ENCODE measurements at regions of chr19 and their contacts with region 1.

Region 1: GRCh38 chr19:2782936-2783780 is at the start of gene SGTA:
- DNase-seq: peak; percentile 99
- H3K4me3 Mint-ChIP-seq: peak within 1 kb of the TSS; percentile 94
- H3K27ac Mint-ChIP-seq: peak within 1 kb of the TSS; percentile 91
- H3K4me1 Mint-ChIP-seq: peaks cover 65% of the 10 kb centered on the region
- H3K27me3 Mint-ChIP-seq: no peaks in the 10 kb centered on the region
- total RNA-seq, gene SGTA: 44.3 to 44.6 TPM

Region 2: DNA sequence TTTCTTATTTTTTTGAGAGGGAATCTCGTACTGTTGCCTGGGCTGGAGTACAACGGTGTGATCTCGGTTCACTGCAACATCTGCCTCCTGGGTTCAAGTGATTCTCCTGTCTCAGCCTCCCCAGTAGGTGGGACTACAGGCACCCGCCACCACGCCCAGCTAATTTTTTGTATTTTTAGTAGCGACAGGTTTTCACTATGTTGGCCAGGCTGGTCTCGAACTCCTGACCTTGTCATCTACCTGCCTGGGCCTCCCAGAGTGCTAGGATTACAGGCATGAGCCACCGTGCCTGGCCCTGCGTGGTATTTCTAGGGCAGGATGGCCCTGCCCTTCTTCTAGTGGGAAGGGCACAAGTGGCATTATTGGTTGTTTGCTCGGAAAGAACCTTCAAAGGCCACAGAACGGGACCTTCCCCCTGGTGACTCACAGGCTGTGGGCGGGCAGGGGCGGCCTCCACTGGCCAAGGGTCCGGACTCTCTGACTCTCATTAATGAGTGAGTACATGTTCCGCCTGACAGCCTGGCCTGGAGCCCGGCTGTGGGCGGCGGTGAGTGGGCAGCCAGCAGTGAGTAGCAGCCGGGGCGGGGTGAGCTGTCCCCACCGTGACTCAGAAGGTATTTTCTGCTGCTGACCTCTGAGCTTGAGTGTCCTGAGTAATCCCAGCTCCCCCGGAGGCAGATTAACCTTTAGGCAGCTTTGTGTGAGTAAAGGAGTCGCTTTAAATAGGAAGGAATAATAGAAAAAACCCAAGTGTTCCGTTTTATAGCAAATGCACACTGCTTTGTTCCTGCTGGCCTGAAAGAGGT is 614.3 kb before region 1 on chr19:
- CTCF ChIA-PET with region 1: no interaction called
- intact Hi-C with region 1: loop called (anchors 10 kb)
- DNase-seq: peak; percentile 71
- H3K4me3 Mint-ChIP-seq: peak overlapping the region; percentile 12
- H3K27ac Mint-ChIP-seq: peak overlapping the region; percentile 72
- H3K4me1 Mint-ChIP-seq: peaks cover 57% of the 10 kb centered on the region
- H3K27me3 Mint-ChIP-seq: no peaks in the 10 kb centered on the region

Region 3: DNA sequence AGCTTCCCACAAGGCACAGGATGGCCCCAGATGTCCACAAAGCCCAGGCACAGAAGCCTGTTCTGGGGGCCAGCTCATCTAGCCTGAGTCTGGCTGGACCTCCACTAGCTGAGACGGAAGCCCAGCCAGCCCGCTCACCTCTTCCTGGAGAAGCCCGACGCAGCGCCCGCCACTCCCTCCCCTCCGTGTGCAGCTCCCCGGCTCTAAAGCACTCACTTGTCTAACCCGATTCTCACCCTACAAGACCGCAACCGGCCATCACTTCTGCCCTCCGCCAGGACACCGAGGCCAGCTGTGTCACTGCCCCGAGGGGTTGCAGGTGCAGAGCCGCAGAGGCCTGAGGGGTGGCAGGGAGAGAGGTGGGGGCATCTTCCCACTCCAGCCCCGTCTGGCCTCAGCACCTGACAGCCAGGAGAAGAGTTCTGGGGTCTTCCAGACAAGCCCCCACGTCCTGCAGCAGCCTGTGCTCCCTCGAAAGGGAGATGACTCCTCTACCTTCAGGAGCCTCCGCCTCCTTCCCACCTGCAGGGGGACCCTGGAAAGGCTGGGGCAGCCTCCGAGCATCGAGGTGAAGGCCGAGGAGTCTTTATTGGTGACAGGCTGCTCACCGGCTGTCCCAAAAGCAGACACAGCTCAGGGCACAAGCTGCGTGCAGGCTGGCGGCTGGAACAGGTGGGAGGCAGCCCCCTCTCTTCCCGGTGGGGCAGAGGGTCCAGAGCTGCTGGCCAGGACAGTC is 56.1 kb before region 1 on chr19:
- CTCF ChIA-PET with region 1: no interaction called
- intact Hi-C with region 1: no loop called
- DNase-seq: no peak
- H3K4me3 Mint-ChIP-seq: no peak overlapping the region
- H3K27ac Mint-ChIP-seq: no peak overlapping the region
- H3K4me1 Mint-ChIP-seq: peaks cover 2% of the 10 kb centered on the region
- H3K27me3 Mint-ChIP-seq: peaks cover 17% of the 10 kb centered on the region

Region 4: DNA sequence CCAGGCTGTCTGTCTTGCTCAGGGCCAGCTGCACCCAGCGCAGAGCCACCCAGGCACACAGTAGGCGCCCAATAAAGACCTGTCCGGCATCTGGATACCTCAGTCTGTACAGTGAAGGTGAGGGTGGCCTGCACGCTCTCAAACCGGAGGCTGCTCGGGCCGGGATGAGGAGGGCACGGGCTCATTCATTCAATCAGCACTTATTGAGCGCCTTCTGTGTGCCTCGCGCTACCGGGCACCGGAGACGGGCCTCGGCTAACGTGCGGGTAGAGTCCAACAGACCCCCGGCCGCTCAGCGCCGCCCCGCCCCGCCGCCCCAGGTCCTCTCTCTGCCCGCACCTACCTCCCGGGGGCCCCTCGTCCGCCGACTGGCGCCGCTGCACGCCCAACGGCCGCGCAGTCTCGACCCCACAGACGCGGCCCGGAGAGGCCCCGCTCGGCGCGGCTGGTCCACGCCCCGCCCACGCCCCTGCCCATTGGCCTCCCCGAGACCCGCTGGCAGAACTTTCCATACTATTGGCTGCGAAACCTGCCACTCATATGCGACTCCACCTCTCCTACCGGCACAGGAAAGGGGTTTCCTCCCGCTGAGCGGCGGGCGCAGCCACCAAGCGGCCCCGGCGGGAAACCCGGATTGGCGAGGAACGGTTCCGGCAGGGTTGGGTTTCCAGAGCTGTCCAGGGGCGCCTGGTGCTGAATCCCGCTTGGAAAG is 43.4 kb before region 1 on chr19 and contains the start of gene SLC39A3:
- CTCF ChIA-PET with region 1: no interaction called
- intact Hi-C with region 1: loop called (anchors 1 kb)
- DNase-seq: peak; percentile 100
- H3K4me3 Mint-ChIP-seq: peak within 1 kb of the TSS; percentile 89
- H3K27ac Mint-ChIP-seq: peak within 1 kb of the TSS; percentile 21
- H3K4me1 Mint-ChIP-seq: peaks cover 19% of the 10 kb centered on the region
- H3K27me3 Mint-ChIP-seq: peaks cover 4% of the 10 kb centered on the region
- total RNA-seq, gene SLC39A3: 20.1 to 23.2 TPM

Region 5: DNA sequence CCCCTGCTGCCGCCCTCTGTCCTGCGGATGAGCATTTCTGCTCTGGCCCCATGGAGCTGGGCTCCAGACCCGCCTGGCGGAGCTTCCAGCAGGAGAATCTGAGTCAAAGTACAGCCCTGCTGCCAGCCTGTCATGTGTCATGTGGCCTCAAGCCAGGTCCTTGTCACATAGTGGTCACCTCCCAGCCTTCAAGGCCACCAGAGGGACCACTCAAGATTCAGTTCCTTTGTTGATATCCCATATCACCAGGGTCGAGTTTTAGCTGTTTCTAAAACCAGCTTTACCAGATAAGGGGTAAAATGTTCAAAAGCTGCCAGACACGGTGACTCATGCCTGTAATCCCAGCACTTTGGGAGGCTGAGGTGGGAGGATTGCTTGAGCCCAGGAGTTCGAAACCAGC is 15.6 kb after region 1 on chr19:
- CTCF ChIA-PET with region 1: no interaction called
- intact Hi-C with region 1: no loop called
- DNase-seq: no peak
- H3K4me3 Mint-ChIP-seq: no peak overlapping the region
- H3K27ac Mint-ChIP-seq: no peak overlapping the region
- H3K4me1 Mint-ChIP-seq: no peaks in the 10 kb centered on the region
- H3K27me3 Mint-ChIP-seq: no peaks in the 10 kb centered on the region

Region 6: DNA sequence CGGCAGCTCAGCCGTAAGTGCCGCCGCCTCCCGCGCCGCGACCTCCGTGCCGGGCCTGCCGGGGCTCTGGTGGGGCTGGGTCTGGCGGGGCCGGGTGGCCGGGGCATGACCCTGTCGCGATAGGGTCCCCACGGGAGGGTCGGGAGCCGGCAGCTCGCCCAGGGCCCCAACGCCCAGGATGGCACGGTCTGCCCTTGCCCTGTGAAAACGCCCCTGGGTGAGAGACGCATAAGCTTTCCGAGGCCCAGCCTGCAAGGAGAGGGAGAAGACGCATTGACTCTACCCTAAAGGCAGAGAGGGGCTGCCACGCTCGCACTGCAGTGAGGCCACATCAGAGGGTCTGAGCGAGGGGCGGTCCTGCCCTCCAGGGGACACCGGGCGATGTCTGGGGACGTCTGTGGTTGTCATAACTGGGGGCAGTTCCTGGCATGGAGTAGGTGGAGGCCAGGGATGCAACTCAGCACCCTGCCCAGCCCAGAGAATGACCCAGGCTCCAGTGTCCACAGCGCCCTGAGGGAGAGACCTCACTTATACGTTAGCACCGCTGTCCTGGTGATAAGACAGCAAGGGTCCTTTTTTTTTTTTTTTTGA is 37.0 kb after region 1 on chr19:
- CTCF ChIA-PET with region 1: interaction called, 4 read pairs
- intact Hi-C with region 1: loop called (anchors 1 kb)
- DNase-seq: peak; percentile 27
- H3K4me3 Mint-ChIP-seq: peak overlapping the region; percentile 79
- H3K27ac Mint-ChIP-seq: no peak overlapping the region
- H3K4me1 Mint-ChIP-seq: peaks cover 10% of the 10 kb centered on the region
- H3K27me3 Mint-ChIP-seq: no peaks in the 10 kb centered on the region

Region 7: DNA sequence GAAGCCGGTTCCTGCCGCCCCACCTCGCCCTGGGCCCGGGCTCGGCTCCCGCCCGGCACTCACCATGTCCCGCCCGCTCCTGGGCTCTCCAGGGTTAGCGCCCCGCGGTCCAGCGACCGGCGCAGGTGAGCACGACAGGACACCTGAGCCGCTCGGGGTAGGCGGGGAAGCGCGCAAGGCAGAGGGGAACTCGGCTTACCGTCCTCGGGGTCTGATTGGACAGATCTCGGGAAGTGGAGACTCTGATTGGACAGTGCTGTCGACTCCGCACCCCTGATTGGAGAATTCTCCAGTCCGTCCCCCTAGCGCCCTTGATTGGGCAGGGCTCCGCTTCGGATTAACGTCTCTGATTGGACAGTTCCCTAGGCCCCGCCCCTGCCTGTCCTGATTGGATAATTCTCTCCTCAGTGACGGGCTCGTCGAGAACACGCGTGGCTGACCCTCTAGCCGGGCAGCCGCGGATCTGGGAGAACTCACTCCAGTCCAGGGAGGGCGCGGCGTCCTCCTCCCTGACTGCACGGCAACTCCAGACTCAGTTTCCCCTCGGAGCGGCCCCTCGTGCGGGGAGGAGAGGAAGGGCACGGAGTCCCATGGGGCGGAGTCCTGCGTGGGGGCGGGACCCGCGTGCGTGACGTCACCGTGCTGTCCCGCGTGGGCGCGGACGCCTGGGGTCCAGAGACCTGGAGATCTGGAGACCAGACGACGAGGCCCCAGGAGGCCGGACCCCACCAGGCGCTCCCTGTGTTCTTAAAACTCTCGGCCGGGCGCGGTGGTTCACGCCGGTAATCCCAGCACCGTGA is 161.8 kb after region 1 on chr19 and contains the start of gene ZNF77:
- CTCF ChIA-PET with region 1: interaction called, 3 read pairs
- intact Hi-C with region 1: loop called (anchors 1 kb)
- DNase-seq: peak; percentile 100
- H3K4me3 Mint-ChIP-seq: peak within 1 kb of the TSS; percentile 98
- H3K27ac Mint-ChIP-seq: peak within 1 kb of the TSS; percentile 95
- H3K4me1 Mint-ChIP-seq: peaks cover 34% of the 10 kb centered on the region
- H3K27me3 Mint-ChIP-seq: no peaks in the 10 kb centered on the region
- total RNA-seq, gene ZNF77: 3.7 to 3.9 TPM

Region 8: DNA sequence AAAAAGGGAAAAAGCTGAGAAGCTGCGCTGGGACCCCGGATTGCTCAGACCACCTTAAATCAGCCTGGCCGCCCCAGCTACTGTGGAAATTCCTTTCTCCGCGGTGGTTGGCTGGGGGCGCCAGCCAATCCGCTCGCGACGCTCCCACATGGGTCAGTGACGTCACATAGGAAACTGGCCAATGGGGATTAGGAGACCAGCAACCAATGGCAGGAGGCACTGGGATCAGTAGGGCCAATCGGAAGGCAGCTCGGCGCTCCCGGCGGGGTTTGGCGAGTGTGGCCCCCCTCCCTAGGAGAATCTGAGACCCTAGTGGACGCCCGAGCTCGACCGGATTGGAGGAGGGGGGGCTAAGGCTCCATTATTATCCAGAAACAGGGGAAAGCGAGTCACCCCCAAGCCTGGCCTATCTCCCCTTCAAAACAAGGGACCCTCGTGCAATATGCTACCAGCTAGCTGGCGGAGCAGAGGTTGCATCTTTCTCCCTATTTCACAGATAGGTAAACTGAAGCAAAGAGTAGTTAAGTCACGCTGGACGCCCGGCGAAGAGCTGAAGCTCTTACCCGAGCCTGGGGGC is 252.5 kb after region 1 on chr19:
- CTCF ChIA-PET with region 1: no interaction called
- intact Hi-C with region 1: loop called (anchors 1 kb)
- DNase-seq: peak; percentile 98
- H3K4me3 Mint-ChIP-seq: peak overlapping the region; percentile 87
- H3K27ac Mint-ChIP-seq: peak overlapping the region; percentile 94
- H3K4me1 Mint-ChIP-seq: peaks cover 19% of the 10 kb centered on the region
- H3K27me3 Mint-ChIP-seq: no peaks in the 10 kb centered on the region

Region 9: DNA sequence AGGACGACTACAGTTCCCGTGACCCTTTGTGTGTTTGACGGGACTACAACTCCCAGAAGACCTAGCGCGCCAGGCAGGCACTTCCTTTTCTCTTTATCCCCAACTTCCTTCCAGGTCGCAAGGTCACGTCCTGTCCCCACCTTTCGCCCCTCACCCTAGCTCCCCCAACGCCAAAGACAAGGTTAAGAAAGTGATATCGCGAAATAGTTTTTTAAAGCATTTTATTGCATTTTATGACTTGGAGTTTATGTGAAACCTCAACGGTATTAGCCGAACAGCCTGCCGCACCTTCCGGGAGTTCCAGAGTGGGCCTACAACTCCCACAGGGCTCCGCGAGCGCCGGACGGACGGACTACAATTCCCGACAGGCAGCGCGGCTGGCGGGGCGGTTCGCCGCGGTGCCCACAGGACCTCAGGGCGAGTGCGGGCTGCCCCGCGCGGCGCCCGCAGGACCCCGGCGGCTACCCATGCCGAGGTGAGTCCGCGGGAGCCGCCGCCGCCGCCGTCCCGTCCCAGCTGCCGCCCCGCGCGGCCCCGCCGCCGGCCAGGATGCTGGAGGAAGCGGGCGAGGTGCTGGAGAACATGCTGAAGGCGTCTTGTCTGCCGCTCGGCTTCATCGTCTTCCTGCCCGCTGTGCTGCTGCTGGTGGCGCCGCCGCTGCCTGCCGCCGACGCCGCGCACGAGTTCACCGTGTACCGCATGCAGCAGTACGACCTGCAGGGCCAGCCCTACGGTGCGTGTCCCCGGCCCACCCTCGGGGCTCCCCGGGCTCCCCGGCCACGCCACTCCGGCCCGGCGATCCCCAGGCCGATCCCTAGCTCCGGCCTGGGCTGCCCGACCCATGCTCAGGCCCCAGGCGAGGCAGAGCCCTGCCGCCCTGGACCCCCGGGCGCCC is 402.6 kb after region 1 on chr19 and contains the start of gene NCLN:
- CTCF ChIA-PET with region 1: no interaction called
- intact Hi-C with region 1: loop called (anchors 1 kb)
- DNase-seq: peak; percentile 95
- H3K4me3 Mint-ChIP-seq: peak within 1 kb of the TSS; percentile 98
- H3K27ac Mint-ChIP-seq: peak within 1 kb of the TSS; percentile 99
- H3K4me1 Mint-ChIP-seq: peaks cover 58% of the 10 kb centered on the region
- H3K27me3 Mint-ChIP-seq: no peaks in the 10 kb centered on the region
- total RNA-seq, gene NCLN: 38.4 to 42.9 TPM

Measured in activated naive CD4-positive, alpha-beta T cell treated with anti-CD3 and anti-CD28 coated beads for 36 hours (primary cell).